Heart left ventricle (tissue), 16 donors: ENCODE measurements at regions of chr7 and their contacts with region 1.

Region 1: DNA sequence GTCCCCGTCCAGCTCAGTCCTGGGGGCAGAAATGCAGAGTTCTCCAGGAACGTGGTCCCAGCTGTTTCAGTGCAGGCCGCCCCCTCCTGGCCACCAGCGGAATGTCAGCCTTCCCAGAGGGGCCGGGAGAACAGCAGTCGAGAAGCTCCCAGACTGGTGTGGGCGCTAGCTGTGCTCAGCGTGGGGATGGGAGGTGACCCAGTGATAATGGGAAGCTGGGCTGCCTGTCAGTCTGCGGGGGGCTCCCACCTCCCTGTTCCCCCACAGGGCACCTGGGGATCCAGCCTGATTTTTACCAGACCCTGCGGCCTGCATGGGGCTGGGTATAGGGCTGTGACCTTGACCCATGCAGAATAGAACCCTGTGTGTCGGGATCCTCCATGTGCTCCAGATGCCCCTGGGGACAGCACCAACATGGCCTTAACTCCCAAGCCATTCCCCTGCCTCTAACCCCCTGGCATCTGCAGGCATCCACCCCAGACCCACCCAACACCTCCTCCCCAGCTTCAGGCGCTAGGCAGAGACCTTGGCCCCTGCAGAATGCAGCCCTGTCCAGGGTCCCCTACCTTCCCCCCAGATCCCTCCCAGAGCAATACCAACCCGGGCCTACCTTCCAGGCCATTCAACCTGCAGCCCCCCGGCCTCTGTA is 946 bp upstream of the ELN start:
- DNase-seq: peak; percentile 81 to 91 (median 84)
- ATAC-seq: peak; percentile 43 to 73 (median 67)
- H3K4me3 ChIP-seq: peak overlapping the region in 8 of 12 donors; percentile 54 to 83 (median 70)
- H3K27ac ChIP-seq: peak overlapping the region in 11 of 12 donors; percentile 57 to 91 (median 82)
- H3K4me1 ChIP-seq: peaks cover 0 to 69% (median 36%) of the 10 kb centered on the region in 12 donors
- H3K27me3 ChIP-seq: peaks cover 0 to 51% (median 0%) of the 10 kb centered on the region in 9 donors
- CTCF ChIP-seq: peak; percentile 85 to 96 (median 93)
- POLR2A ChIP-seq: no peak

Region 2: DNA sequence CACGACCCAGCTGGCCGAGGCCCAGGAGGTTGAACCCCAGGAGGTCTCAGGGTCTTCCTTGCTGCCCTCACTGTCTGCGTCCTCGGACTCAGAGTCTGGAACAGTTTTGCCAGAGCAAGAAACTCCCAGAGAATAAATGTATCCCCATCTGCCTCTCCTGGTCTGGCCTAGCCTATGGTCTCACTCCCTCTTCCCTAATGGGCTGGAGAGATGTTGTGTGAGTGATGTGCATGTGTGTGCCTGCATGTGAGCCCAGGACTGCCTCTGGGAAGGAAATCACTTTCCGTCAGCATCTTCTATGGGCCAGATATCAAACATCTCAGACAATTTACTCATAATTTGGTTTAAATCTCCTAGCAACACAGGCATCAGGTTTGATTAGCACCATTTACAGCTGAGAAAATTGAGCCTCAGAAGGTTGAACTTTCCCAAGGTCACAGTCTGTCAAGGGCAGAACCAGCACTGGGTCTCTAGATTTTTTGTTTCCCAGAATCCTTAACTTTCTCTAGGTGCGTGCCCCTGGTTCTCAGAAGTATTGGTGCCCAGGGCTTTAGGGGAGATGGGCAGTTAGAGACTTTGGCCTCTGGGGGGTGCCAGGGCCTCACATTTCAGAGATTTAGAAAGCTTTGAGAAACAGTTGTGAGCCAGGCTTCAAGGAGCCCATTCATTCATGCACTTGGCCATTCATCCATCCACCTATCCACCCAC is 161.1 kb before region 1 on chr7:
- intact Hi-C with region 1: loop called (anchors 1 to 5 kb)
- DNase-seq: peak in 1 of 5 donors; percentile 57
- ATAC-seq: peak; percentile 39 to 77 (median 76)
- H3K4me3 ChIP-seq: no peak overlapping the region
- H3K27ac ChIP-seq: no peak overlapping the region
- H3K4me1 ChIP-seq: peaks cover 0 to 17% (median 8%) of the 10 kb centered on the region in 12 donors
- H3K27me3 ChIP-seq: no peaks in the 10 kb centered on the region
- CTCF ChIP-seq: peak; percentile 55 to 77 (median 68)
- POLR2A ChIP-seq: no peak

Region 3: DNA sequence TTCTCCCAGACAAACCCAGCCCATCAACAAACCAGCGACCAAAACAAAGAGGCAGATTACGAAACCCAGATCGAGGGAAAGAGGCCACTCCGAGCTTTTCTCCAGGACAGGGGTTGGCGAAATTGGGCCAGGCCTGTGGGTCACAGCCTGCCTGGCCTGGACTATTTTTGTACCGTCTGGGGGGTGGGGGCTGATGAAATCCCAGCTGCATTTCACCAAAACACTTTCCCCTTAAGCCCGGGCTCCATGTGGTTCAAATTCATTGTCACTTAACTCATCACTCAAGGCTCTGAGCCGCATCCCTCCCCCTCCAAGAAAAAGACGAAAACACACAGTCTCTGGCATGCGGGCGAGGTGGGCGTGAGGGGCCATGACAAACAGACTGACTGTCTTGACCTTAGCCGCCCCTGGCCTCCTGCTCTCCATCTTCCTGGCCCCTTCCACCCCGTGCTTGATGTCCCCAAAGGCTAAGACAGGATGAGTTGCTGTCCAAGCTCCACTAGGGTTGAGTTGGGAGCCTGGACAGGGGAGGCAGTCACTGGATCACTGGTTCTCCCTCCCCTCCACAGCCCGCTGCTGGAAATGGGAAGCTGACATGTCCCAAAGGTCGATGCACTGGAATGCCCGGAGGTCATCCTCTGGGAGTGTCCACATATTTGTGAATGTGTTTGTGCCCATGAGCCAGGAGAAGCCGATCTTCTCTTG is 146.9 kb before region 1 on chr7:
- intact Hi-C with region 1: loop called in 2 of 10 experiments (anchors 5 kb)
- DNase-seq: peak in 4 of 5 donors; percentile 38 to 85 (median 74)
- ATAC-seq: peak; percentile 49 to 87 (median 62)
- H3K4me3 ChIP-seq: no peak overlapping the region
- H3K27ac ChIP-seq: peak overlapping the region; percentile 58 to 89 (median 78)
- H3K4me1 ChIP-seq: peaks cover 3 to 37% (median 29%) of the 10 kb centered on the region in 12 donors
- H3K27me3 ChIP-seq: no peaks in the 10 kb centered on the region
- CTCF ChIP-seq: no peak
- POLR2A ChIP-seq: no peak

Region 4: GRCh38 chr7:73894733-73895551 is 132.1 kb before region 1 on chr7:
- intact Hi-C with region 1: loop called in 2 of 10 experiments (anchors 5 kb)
- DNase-seq: peak; percentile 73 to 91 (median 88)
- ATAC-seq: peak; percentile 72 to 87 (median 75)
- H3K4me3 ChIP-seq: no peak overlapping the region
- H3K27ac ChIP-seq: peak overlapping the region in 10 of 12 donors; percentile 18 to 74 (median 44)
- H3K4me1 ChIP-seq: peaks cover 0 to 50% (median 15%) of the 10 kb centered on the region in 12 donors
- H3K27me3 ChIP-seq: no peaks in the 10 kb centered on the region
- CTCF ChIP-seq: peak in 1 of 12 donors; percentile 15
- POLR2A ChIP-seq: no peak

Region 5: GRCh38 chr7:73978661-73979563 is 48.1 kb before region 1 on chr7:
- intact Hi-C with region 1: loop called in 1 of 10 experiments (anchors 10 kb)
- DNase-seq: peak in 4 of 5 donors; percentile 38 to 50 (median 48)
- ATAC-seq: peak in 3 of 4 donors; percentile 28 to 70 (median 52)
- H3K4me3 ChIP-seq: no peak overlapping the region
- H3K27ac ChIP-seq: no peak overlapping the region
- H3K4me1 ChIP-seq: peaks cover 0 to 15% (median 5%) of the 10 kb centered on the region in 12 donors
- H3K27me3 ChIP-seq: no peaks in the 10 kb centered on the region
- CTCF ChIP-seq: peak; percentile 18 to 47 (median 30)
- POLR2A ChIP-seq: no peak

Region 6: GRCh38 chr7:73986158-73986631 is 40.8 kb before region 1 on chr7:
- intact Hi-C with region 1: loop called in 1 of 10 experiments (anchors 5 kb)
- DNase-seq: peak in 3 of 5 donors; percentile 80 to 83 (median 81)
- ATAC-seq: peak; percentile 63 to 80 (median 76)
- H3K4me3 ChIP-seq: no peak overlapping the region
- H3K27ac ChIP-seq: peak overlapping the region in 10 of 12 donors; percentile 24 to 77 (median 49)
- H3K4me1 ChIP-seq: peaks cover 0 to 18% (median 9%) of the 10 kb centered on the region in 12 donors
- H3K27me3 ChIP-seq: no peaks in the 10 kb centered on the region
- CTCF ChIP-seq: no peak
- POLR2A ChIP-seq: no peak

Region 7: GRCh38 chr7:74141705-74142104 is 114.7 kb after region 1 on chr7:
- intact Hi-C with region 1: no loop called
- DNase-seq: no peak
- ATAC-seq: no peak
- H3K4me3 ChIP-seq: no peak overlapping the region
- H3K27ac ChIP-seq: no peak overlapping the region
- H3K4me1 ChIP-seq: peaks cover 0 to 6% (median 0%) of the 10 kb centered on the region in 12 donors
- H3K27me3 ChIP-seq: no peaks in the 10 kb centered on the region
- CTCF ChIP-seq: no peak
- POLR2A ChIP-seq: no peak

Region 8: DNA sequence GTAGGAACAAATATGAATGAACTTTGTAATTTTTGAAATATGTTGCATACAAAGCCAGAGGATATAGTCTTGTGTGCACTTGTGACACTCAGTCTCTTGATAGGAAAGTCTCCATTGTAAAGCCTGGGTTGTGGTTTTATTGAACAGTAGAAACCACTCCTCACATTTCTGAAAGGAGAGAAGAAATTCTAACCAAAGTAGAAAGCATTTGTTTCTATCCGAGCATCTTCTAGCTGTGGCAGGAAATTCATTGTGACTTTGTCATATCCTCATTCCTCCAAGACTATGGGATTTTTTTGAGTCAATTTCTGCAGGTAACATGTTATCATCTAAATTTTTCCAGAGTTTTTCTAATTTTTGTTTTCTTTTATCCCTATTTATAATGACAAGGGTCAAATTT is 691.3 kb after region 1 on chr7:
- intact Hi-C with region 1: no loop called
- DNase-seq: no peak
- ATAC-seq: no peak
- H3K4me3 ChIP-seq: no peak overlapping the region
- H3K27ac ChIP-seq: no peak overlapping the region
- H3K4me1 ChIP-seq: no peaks in the 10 kb centered on the region
- H3K27me3 ChIP-seq: no peaks in the 10 kb centered on the region
- CTCF ChIP-seq: no peak
- POLR2A ChIP-seq: no peak